ENCODE measurements at regions of chr14 and their contacts with region 1.

Region 1: GRCh38 chr14:52716155-52716554 is 9.2 kb downstream of the PSMC6 start:
- H3K4me3 Mint-ChIP-seq: no peak overlapping the region
- H3K27ac Mint-ChIP-seq: peak overlapping the region; percentile 56
- H3K4me1 Mint-ChIP-seq: peaks cover 10% of the 10 kb centered on the region
- H3K27me3 Mint-ChIP-seq: no peaks in the 10 kb centered on the region

Region 2: GRCh38 chr14:52729925-52730667 is 13.9 kb after region 1 on chr14 and contains the start of gene STYX:
- intact Hi-C with region 1: loop called (anchors 2 kb)
- H3K4me3 Mint-ChIP-seq: peak within 1 kb of the TSS; percentile 94
- H3K27ac Mint-ChIP-seq: peak within 1 kb of the TSS; percentile 97
- H3K4me1 Mint-ChIP-seq: peaks cover 20% of the 10 kb centered on the region
- H3K27me3 Mint-ChIP-seq: no peaks in the 10 kb centered on the region

Region 3: DNA sequence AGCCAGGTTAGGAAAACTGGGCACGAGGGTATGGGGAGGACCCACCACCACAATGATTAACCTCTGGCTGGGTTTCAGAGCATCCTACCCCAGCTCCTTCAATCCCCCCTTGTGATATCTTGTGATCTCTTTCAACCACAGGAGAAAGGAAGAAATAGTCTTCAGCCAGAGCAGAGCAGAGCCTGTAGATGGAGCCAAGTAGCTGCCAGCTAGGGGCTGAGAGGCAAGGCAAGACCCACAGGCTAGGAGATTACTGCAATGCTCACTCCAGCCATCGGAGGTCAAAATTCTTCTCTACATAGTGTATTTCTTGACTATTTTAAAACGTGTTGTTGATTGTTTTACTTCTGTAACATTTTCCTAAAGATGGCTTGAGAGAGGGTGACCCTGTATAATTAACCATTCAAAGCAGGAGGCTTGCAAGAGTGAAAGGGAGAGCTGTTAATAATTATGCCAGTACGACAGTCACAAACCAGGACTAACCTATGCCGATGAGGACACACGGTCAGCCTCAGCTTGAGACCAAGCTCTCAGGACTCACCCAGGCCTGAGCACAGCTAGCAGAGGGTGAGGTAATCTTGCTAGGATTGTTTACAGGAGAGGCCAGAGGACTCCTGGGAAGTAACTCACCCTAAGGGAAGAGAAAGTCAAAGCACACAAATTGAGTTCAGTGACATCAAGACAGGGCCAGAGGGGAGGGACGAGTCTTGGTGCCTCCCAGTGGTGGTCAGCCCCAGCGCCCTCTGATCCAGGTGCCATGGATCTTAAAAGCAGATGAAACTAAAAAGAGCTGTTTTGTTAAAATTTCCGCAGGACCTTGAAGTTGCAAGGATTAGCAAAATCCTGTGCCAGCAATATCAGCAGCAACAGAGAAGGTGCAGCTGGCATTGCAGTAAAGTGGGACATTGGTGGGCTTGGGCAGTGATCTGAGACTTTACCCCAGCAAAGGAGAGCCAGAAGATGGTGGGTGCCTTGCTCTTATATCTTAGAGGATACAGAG is 1650.9 kb after region 1 on chr14:
- intact Hi-C with region 1: no loop called
- H3K4me3 Mint-ChIP-seq: no peak overlapping the region
- H3K27ac Mint-ChIP-seq: no peak overlapping the region
- H3K4me1 Mint-ChIP-seq: peaks cover 14% of the 10 kb centered on the region
- H3K27me3 Mint-ChIP-seq: peaks cover 2% of the 10 kb centered on the region

Measured in dendritic cell treated with granulocyte-macrophage colony-stimulating factor and Interleukin-4, amounts not matched to agents 40 ng/mL and 50 ng/mL, for 4 days (primary cell).